H1 (cell line): ENCODE measurements at regions of chr5 and their contacts with region 1.

Region 1: GRCh38 chr5:96997265-96997859 is 61.5 kb downstream of the LNPEP start:
- DNase-seq: no peak
- H3K4me3 ChIP-seq: no peak overlapping the region
- H3K27ac ChIP-seq: no peak overlapping the region
- H3K4me1 ChIP-seq: no peaks in the 10 kb centered on the region; a peak in 1 of 7 replicates
- H3K27me3 ChIP-seq: no peaks in the 10 kb centered on the region
- CTCF ChIP-seq: peak in 2 of 3 experiments; percentile 34; a peak in 2 of 4 replicates
- EP300 ChIP-seq: no peak
- POLR2A ChIP-seq: no peak
- RAD21 ChIP-seq: peak; percentile 57 to 59

Region 2: DNA sequence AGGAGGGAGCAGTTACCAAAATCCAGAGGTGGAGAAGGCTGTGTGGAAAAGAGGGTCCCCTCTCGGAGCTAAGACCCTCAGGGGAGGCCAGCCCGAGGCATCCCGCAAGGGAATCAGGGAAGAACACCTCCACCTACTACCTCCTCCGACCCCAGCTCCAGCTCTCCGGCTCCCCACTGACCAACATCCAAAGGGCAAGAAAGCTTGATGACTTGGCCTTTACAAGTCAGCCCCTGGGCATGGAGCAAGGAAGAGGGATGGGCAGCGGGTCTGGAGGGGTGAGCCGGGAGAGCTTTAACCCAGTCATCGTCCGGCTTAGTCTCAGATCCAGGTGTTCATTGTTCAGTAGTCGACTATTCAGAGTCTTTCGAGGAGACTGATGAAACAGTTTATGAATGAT is 221.7 kb before region 1 on chr5:
- CTCF ChIA-PET with region 1: no interaction called
- POLR2A ChIA-PET with region 1: no interaction called
- DNase-seq: no peak
- H3K4me3 ChIP-seq: no peak overlapping the region
- H3K27ac ChIP-seq: no peak overlapping the region
- H3K4me1 ChIP-seq: no peaks in the 10 kb centered on the region
- H3K27me3 ChIP-seq: no peaks in the 10 kb centered on the region
- CTCF ChIP-seq: no peak
- EP300 ChIP-seq: no peak
- POLR2A ChIP-seq: no peak
- RAD21 ChIP-seq: no peak

Region 3: GRCh38 chr5:96868603-96869371 is 128.6 kb before region 1 on chr5:
- CTCF ChIA-PET with region 1: interaction called, 18 read pairs
- POLR2A ChIA-PET with region 1: no interaction called
- DNase-seq: no peak
- H3K4me3 ChIP-seq: no peak overlapping the region
- H3K27ac ChIP-seq: no peak overlapping the region
- H3K4me1 ChIP-seq: peaks cover 0 to 8% (median 5%) of the 10 kb centered on the region in 4 experiments; a peak in 4 of 7 replicates
- H3K27me3 ChIP-seq: no peaks in the 10 kb centered on the region
- CTCF ChIP-seq: peak in 2 of 3 experiments; percentile 81 to 92; a peak in 3 of 4 replicates
- EP300 ChIP-seq: no peak
- POLR2A ChIP-seq: no peak
- RAD21 ChIP-seq: peak; percentile 94 to 95

Region 4: GRCh38 chr5:96952118-96952750 is 45.1 kb before region 1 on chr5:
- CTCF ChIA-PET with region 1: no interaction called
- POLR2A ChIA-PET with region 1: no interaction called
- DNase-seq: no peak
- H3K4me3 ChIP-seq: no peak overlapping the region
- H3K27ac ChIP-seq: no peak overlapping the region
- H3K4me1 ChIP-seq: peaks cover 0 to 4% (median 0%) of the 10 kb centered on the region in 4 experiments; a peak in 3 of 7 replicates
- H3K27me3 ChIP-seq: no peaks in the 10 kb centered on the region
- CTCF ChIP-seq: no peak
- EP300 ChIP-seq: no peak
- POLR2A ChIP-seq: no peak
- RAD21 ChIP-seq: no peak

Region 5: GRCh38 chr5:96986450-96986849 is 10.9 kb before region 1 on chr5:
- CTCF ChIA-PET with region 1: interaction called, 22 read pairs
- POLR2A ChIA-PET with region 1: no interaction called
- DNase-seq: no peak
- H3K4me3 ChIP-seq: no peak overlapping the region
- H3K27ac ChIP-seq: no peak overlapping the region
- H3K4me1 ChIP-seq: no peaks in the 10 kb centered on the region
- H3K27me3 ChIP-seq: no peaks in the 10 kb centered on the region
- CTCF ChIP-seq: no peak
- EP300 ChIP-seq: no peak
- POLR2A ChIP-seq: no peak
- RAD21 ChIP-seq: no peak

Region 6: DNA sequence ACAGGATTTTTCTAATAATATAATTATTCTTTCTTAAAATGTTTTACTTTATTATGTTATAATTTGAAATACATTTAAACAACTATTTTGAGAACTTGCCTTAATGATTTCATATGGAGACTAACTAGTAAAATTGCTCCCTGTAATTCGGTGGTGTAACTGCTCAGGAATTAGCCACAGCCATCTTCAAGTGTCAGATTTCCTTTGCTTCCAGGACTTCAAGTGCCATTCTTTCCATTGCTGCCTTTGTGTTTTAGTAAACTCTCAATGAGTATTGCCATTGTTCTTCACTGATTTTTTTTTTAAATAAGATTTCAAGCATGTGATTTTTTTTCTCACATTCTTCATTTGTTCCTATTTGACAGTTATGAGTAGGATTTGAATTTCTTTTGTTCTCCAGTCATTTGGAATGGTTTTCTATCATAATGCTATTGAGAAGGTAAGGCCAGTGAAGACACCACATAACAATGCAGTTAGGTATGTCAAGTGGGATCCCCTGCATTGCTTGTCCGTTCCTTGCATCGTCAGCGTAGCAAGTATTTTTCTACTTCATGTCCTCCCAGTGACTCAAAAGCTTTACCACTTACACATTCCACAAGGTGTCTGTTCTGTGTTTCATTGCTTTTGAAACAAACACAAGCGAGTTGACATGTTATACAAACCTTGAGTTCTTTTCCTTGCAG is 22.2 kb after region 1 on chr5:
- CTCF ChIA-PET with region 1: no interaction called
- POLR2A ChIA-PET with region 1: no interaction called
- DNase-seq: peak in 1 of 2 experiments; percentile 29
- H3K4me3 ChIP-seq: no peak overlapping the region
- H3K27ac ChIP-seq: no peak overlapping the region
- H3K4me1 ChIP-seq: no peaks in the 10 kb centered on the region
- H3K27me3 ChIP-seq: no peaks in the 10 kb centered on the region
- CTCF ChIP-seq: no peak
- EP300 ChIP-seq: no peak
- POLR2A ChIP-seq: no peak
- RAD21 ChIP-seq: no peak

Region 7: DNA sequence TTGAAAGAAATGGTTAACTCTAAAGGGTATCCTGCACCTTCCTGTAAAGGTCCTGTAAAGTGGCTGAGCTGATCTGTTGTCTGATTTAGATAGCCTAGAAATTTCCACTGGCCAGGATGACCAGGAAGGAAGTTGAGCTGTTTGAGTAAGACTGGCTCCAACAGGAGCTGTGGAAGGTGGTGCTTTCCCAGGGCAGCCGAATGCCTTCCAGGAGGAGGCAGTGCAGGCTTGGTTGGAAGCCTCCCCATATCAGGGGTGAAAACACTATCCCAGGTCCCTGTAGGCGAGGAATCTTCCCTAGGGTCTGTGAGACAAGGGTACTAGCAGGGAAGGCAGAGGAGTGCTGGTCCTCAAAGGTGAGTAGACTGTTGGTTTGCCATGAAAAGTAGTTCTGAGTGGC is 46.7 kb after region 1 on chr5:
- CTCF ChIA-PET with region 1: interaction called, 21 read pairs
- POLR2A ChIA-PET with region 1: interaction called, 4 read pairs
- DNase-seq: peak; percentile 50 to 75
- H3K4me3 ChIP-seq: no peak overlapping the region
- H3K27ac ChIP-seq: no peak overlapping the region
- H3K4me1 ChIP-seq: peaks cover 0 to 3% (median under 1%) of the 10 kb centered on the region in 4 experiments; a peak in 3 of 7 replicates
- H3K27me3 ChIP-seq: no peaks in the 10 kb centered on the region
- CTCF ChIP-seq: peak; percentile 88 to 99 (median 88)
- EP300 ChIP-seq: no peak
- POLR2A ChIP-seq: no peak
- RAD21 ChIP-seq: peak; percentile 95 to 97

Region 8: GRCh38 chr5:97162045-97162444 is 164.7 kb after region 1 on chr5:
- CTCF ChIA-PET with region 1: interaction called, 13 read pairs
- POLR2A ChIA-PET with region 1: interaction called, 3 read pairs
- DNase-seq: peak in 1 of 2 experiments; percentile 67
- H3K4me3 ChIP-seq: no peak overlapping the region
- H3K27ac ChIP-seq: no peak overlapping the region
- H3K4me1 ChIP-seq: no peaks in the 10 kb centered on the region
- H3K27me3 ChIP-seq: no peaks in the 10 kb centered on the region
- CTCF ChIP-seq: peak in 2 of 3 experiments; percentile 72 to 84; a peak in 3 of 4 replicates
- EP300 ChIP-seq: no peak
- POLR2A ChIP-seq: no peak
- RAD21 ChIP-seq: peak; percentile 90 to 93